ENCODE measurements at regions of chr2 and their contacts with region 1.

Region 1: GRCh38 chr2:42568401-42569115 is at the start of gene MTA3:
- DNase-seq: no peak
- ATAC-seq: peak; percentile 79
- H3K4me3 ChIP-seq: peak within 1 kb of the TSS; percentile 76
- H3K27ac ChIP-seq: peak within 1 kb of the TSS; percentile 80
- H3K4me1 ChIP-seq: peaks cover 24% of the 10 kb centered on the region
- H3K27me3 ChIP-seq: no peaks in the 10 kb centered on the region
- CTCF ChIP-seq: no peak
- EP300 ChIP-seq: no peak
- POLR2A ChIP-seq: peak; percentile 63; the same call in 1 of the 2 replicates
- RAD21 ChIP-seq: no peak
- polyA plus RNA-seq, gene MTA3: 17.6 to 21.5 TPM

Region 2: DNA sequence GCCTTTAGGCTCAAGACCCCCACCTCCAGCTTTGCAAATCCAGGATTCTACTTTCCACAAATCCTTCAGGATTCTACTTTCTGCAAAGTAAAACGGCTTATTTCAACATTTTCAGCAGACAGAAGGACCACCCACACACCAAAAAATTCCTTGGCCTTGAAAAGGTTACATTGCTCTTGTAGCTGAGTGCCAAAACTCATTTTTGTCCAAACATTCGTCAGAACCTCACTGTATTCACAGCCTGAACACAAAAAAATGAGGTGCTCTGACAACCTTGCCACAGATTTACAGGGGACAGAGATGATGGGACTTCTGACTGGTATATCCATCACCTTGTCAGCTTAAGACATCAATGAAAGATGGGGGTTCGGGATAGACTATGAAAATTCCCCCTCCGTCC is 144.5 kb before region 1 on chr2:
- CTCF ChIA-PET with region 1: no interaction called
- POLR2A ChIA-PET with region 1: no interaction called
- RAD21 ChIA-PET with region 1: no interaction called
- SMC1A ChIA-PET with region 1: no interaction called
- in situ Hi-C with region 1: no loop called
- intact Hi-C with region 1: no loop called
- DNase-seq: no peak
- ATAC-seq: no peak
- H3K4me3 ChIP-seq: no peak overlapping the region
- H3K27ac ChIP-seq: no peak overlapping the region
- H3K4me1 ChIP-seq: no peaks in the 10 kb centered on the region
- H3K27me3 ChIP-seq: no peaks in the 10 kb centered on the region; a peak in 1 of 4 replicates
- CTCF ChIP-seq: no peak
- EP300 ChIP-seq: no peak
- POLR2A ChIP-seq: no peak
- RAD21 ChIP-seq: no peak

Region 3: DNA sequence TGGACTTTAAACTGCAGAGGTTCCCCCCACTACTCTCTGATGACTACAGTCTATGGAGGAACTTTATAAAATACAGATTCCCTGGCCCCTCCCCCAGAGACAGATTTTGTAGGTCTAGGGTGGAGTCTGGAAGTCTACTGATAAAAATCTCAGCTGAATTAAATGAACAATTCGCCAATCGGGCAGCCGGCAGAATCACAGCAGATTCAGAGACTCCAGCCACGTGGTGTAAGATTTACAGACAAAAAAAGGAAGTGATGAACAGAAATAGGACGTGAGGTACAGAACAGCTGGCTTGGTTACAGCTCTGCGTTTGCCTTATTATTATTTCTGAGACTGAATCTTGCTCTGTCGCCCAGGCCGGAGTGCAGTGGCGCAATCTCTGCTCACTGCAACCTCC is 21.5 kb before region 1 on chr2:
- CTCF ChIA-PET with region 1: interaction called, 4 read pairs
- POLR2A ChIA-PET with region 1: no interaction called
- RAD21 ChIA-PET with region 1: no interaction called
- SMC1A ChIA-PET with region 1: interaction called, 10 read pairs
- in situ Hi-C with region 1: no loop called
- intact Hi-C with region 1: no loop called
- DNase-seq: no peak
- ATAC-seq: peak; percentile 74
- H3K4me3 ChIP-seq: no peak overlapping the region
- H3K27ac ChIP-seq: no peak overlapping the region
- H3K4me1 ChIP-seq: peaks cover 5% of the 10 kb centered on the region; the same call in 1 of the 2 replicates
- H3K27me3 ChIP-seq: no peaks in the 10 kb centered on the region
- CTCF ChIP-seq: no peak
- EP300 ChIP-seq: no peak
- POLR2A ChIP-seq: no peak
- RAD21 ChIP-seq: no peak

Region 4: GRCh38 chr2:42639340-42640077 is 71.0 kb after region 1 on chr2:
- CTCF ChIA-PET with region 1: interaction called, 4 read pairs
- POLR2A ChIA-PET with region 1: interaction called, 4 read pairs
- RAD21 ChIA-PET with region 1: interaction called, 8 read pairs
- SMC1A ChIA-PET with region 1: interaction called, 11 read pairs
- in situ Hi-C with region 1: no loop called
- intact Hi-C with region 1: no loop called
- DNase-seq: no peak
- ATAC-seq: peak; percentile 81
- H3K4me3 ChIP-seq: no peak overlapping the region
- H3K27ac ChIP-seq: peak overlapping the region; percentile 43; the same call in 1 of the 2 replicates
- H3K4me1 ChIP-seq: peaks cover 4% of the 10 kb centered on the region
- H3K27me3 ChIP-seq: no peaks in the 10 kb centered on the region
- CTCF ChIP-seq: no peak
- EP300 ChIP-seq: no peak
- POLR2A ChIP-seq: no peak
- RAD21 ChIP-seq: no peak

Region 5: GRCh38 chr2:42722320-42723190 is 154.0 kb after region 1 on chr2:
- CTCF ChIA-PET with region 1: no interaction called
- POLR2A ChIA-PET with region 1: no interaction called
- RAD21 ChIA-PET with region 1: no interaction called
- SMC1A ChIA-PET with region 1: no interaction called
- in situ Hi-C with region 1: no loop called
- intact Hi-C with region 1: no loop called
- DNase-seq: peak; percentile 91
- ATAC-seq: peak; percentile 98
- H3K4me3 ChIP-seq: peak overlapping the region; percentile 10; the same call in 1 of the 2 replicates
- H3K27ac ChIP-seq: peak overlapping the region; percentile 86
- H3K4me1 ChIP-seq: peaks cover 19% of the 10 kb centered on the region
- H3K27me3 ChIP-seq: no peaks in the 10 kb centered on the region
- CTCF ChIP-seq: no peak
- EP300 ChIP-seq: peak; percentile 97
- POLR2A ChIP-seq: no peak
- RAD21 ChIP-seq: 0 out of 2 replicates have a peak, but pooled peaks have one; percentile 23